IMR-90 (cell line): ENCODE measurements at regions of chr15 and their contacts with region 1.

Region 1: GRCh38 chr15:88878720-88879184 is 16.6 kb downstream of the HAPLN3 start:
- DNase-seq: peak; percentile 35
- ATAC-seq: peak; percentile 76
- H3K4me3 ChIP-seq: no peak overlapping the region
- H3K27ac ChIP-seq: no peak overlapping the region
- H3K4me1 ChIP-seq: peaks cover 4% of the 10 kb centered on the region
- H3K27me3 ChIP-seq: no peaks in the 10 kb centered on the region
- CTCF ChIP-seq: peak; percentile 73
- POLR2A ChIP-seq: no peak
- RAD21 ChIP-seq: peak; percentile 76

Region 2: DNA sequence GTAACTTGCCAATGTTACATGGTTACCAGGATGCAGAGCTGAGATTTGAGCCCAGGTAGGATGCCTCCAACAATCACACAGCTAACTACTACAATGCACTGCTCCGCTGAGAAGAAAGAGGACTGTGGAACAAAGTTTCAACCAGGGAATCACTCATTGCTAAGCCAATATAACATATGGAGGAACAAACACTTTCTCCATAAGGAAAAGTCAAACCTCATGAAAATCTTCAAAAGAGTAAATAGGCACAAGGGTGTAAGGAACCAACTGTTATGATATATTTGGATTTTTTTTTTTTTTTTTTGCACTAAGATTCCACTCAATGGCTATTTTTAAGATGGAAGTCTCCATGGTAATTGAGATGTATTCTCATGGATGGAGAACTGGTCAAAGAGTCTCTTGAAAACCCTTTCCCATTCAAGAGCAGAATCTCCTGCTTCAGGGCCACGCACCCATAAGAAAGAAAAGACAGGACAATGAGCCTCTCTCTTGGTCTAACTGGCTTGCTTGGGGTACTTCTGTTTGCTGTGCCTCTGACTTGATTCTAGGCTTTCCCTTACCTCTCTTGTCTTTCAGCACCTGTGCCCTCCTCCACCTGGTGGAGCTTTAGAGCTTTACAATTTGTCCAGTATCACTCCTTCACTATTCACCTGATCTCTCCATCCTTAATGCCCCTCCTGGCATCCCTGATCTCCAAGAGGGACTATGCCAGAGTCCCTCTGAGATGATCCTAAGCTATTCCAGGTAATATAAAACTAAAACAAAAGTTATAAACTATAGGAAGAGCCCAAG is 875.0 kb before region 1 on chr15:
- CTCF ChIA-PET with region 1: no interaction called
- POLR2A ChIA-PET with region 1: no interaction called
- dilution Hi-C with region 1: no loop called
- in situ Hi-C with region 1: no loop called
- intact Hi-C with region 1: no loop called
- DNase-seq: no peak
- ATAC-seq: no peak
- H3K4me3 ChIP-seq: no peak overlapping the region
- H3K27ac ChIP-seq: no peak overlapping the region
- H3K4me1 ChIP-seq: no peaks in the 10 kb centered on the region
- H3K27me3 ChIP-seq: no peaks in the 10 kb centered on the region
- CTCF ChIP-seq: no peak
- POLR2A ChIP-seq: no peak
- RAD21 ChIP-seq: no peak

Region 3: DNA sequence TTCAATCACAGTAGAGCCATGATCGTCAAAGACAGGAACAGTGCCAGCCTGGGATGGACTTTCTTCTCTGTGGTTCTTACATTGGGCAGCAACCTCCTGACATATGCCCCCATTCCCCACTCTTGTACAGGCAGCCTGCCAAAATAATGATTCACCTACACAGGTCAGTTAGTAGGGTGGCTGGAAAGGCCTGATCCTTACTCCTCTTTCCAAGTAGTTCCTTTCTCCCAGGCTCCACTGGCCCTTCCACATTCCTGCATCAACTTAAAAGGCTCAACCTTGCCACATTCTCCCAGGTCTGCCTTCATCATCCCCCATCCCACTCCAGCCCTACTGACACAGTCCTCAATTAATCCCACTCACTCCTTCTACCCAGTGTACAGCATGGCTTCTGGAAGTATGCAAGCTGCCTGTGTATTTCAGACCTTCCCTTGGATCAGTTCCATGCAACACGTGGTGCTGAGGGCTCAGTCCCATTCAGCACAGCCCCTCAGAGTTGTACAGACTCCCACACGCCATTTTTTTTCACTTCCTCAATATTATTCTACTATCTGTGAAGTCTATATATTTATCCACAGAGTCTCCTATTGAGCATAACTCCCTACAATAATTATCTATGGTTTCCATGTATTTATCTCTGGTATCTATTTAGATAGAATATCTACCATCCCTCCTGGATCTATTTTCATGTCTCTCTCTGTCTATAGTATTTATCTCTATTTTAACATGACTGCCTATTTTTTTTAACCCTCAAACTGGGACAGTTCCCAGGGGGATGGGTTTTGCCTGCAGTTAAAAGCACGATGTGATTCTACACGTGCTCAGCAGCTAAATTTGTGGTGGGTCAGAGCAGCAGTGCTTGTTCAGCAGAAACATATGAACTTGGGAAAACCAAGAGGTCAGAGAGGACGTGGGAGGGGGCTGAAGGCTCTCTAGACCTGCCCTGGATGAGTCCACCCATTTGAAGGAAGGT is 811.8 kb before region 1 on chr15:
- CTCF ChIA-PET with region 1: no interaction called
- POLR2A ChIA-PET with region 1: no interaction called
- dilution Hi-C with region 1: no loop called
- in situ Hi-C with region 1: no loop called
- intact Hi-C with region 1: no loop called
- DNase-seq: no peak
- ATAC-seq: no peak
- H3K4me3 ChIP-seq: no peak overlapping the region
- H3K27ac ChIP-seq: no peak overlapping the region
- H3K4me1 ChIP-seq: no peaks in the 10 kb centered on the region
- H3K27me3 ChIP-seq: no peaks in the 10 kb centered on the region
- CTCF ChIP-seq: no peak
- POLR2A ChIP-seq: no peak
- RAD21 ChIP-seq: no peak

Region 4: GRCh38 chr15:88800026-88800425 is 78.7 kb before region 1 on chr15:
- CTCF ChIA-PET with region 1: no interaction called
- POLR2A ChIA-PET with region 1: no interaction called
- dilution Hi-C with region 1: no loop called
- in situ Hi-C with region 1: no loop called
- intact Hi-C with region 1: no loop called
- DNase-seq: peak; percentile 40
- ATAC-seq: no peak
- H3K4me3 ChIP-seq: no peak overlapping the region
- H3K27ac ChIP-seq: no peak overlapping the region
- H3K4me1 ChIP-seq: no peaks in the 10 kb centered on the region
- H3K27me3 ChIP-seq: peaks cover 41% of the 10 kb centered on the region
- CTCF ChIP-seq: no peak
- POLR2A ChIP-seq: no peak
- RAD21 ChIP-seq: no peak

Region 5: GRCh38 chr15:88891546-88892254 is 12.9 kb after region 1 on chr15:
- CTCF ChIA-PET with region 1: interaction called, 10 read pairs
- POLR2A ChIA-PET with region 1: no interaction called
- dilution Hi-C with region 1: no loop called
- in situ Hi-C with region 1: no loop called
- intact Hi-C with region 1: no loop called
- DNase-seq: no peak
- ATAC-seq: no peak
- H3K4me3 ChIP-seq: no peak overlapping the region
- H3K27ac ChIP-seq: no peak overlapping the region
- H3K4me1 ChIP-seq: peaks cover 5% of the 10 kb centered on the region
- H3K27me3 ChIP-seq: no peaks in the 10 kb centered on the region
- CTCF ChIP-seq: no peak
- POLR2A ChIP-seq: no peak
- RAD21 ChIP-seq: no peak